ENCODE measurements at regions of chr12 and their contacts with region 1.

Region 1: GRCh38 chr12:104286538-104287482 is 16.7 kb upstream of the EID3 start:
- DNase-seq: peak; percentile 92
- ATAC-seq: peak; percentile 86
- H3K4me3 ChIP-seq: peak overlapping the region; percentile 86 to 87
- H3K27ac ChIP-seq: peak overlapping the region; percentile 99
- H3K4me1 ChIP-seq: peaks cover 25% of the 10 kb centered on the region
- H3K27me3 ChIP-seq: no peaks in the 10 kb centered on the region
- CTCF ChIP-seq: no peak

Region 2: DNA sequence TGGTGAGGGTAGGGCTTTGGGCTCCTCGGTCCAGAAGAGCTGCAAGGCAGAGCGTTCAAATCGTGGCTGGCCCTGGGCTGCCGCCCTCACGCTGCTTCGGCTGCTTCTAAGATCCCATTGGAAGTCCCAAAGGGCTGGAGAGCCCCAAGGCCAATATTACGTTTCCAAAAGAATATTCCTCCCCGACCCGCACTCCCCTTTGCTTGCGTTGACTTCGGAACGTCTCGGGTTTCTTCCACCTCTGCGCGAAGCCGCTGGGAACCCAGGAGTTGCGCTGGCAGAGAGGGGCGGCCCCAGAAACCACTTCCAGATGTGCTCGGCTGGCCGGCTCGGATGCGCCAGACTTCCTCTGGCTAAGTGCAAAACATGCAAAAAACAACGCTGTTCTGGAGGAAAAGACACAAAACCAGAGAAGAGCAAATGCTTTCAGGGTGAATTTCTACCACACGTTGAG is 236.9 kb before region 1 on chr12 and contains the start of gene GLT8D2:
- CTCF ChIA-PET with region 1: no interaction called
- POLR2A ChIA-PET with region 1: no interaction called
- in situ Hi-C with region 1: no loop called
- intact Hi-C with region 1: no loop called
- DNase-seq: no peak
- ATAC-seq: peak; percentile 81
- H3K4me3 ChIP-seq: peak within 1 kb of the TSS; percentile 44 to 59
- H3K27ac ChIP-seq: peak within 1 kb of the TSS; percentile 27; the same call in 1 of the 2 replicates
- H3K4me1 ChIP-seq: peaks cover 12% of the 10 kb centered on the region
- H3K27me3 ChIP-seq: peaks cover 3% of the 10 kb centered on the region; the same call in 1 of the 2 replicates
- CTCF ChIP-seq: no peak
- total RNA-seq, gene GLT8D2: 0.54 TPM

Region 3: DNA sequence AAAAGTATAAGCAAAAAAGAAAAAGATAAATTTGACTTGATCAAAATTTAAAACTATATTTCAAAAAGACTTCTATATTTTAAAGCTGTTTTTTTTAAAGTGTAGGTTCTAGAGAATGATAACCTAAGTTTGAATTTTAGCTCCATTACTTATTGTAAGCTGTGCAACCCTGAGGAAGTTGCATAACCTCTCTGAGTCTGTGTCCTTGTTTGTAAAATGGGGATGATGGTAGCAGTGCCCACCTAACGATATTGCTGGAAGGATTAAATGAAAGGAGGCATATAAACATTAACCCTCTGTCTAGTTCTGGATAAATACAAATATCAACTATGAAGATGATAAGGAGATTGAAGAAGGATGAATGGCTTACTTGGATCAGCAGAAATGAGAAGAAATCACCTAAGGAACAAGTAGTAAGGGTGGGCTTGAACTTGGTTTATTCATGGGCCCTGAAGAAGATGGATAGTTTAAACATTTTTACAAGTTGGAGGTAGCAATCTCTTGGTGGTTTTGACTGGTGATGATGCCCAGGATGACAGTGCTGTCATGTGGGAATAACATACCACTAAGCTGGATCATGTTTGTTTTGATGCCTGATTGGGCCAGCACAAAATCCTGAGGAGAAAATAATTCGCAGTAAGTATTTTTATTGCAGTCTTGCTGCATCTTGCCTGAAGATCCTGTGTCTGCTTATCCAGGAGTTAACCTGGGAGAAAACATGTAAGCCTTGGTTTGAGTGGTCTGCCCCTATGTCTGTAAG is 36.3 kb before region 1 on chr12:
- CTCF ChIA-PET with region 1: interaction called, 3 read pairs
- POLR2A ChIA-PET with region 1: interaction called, 10 read pairs
- in situ Hi-C with region 1: no loop called
- intact Hi-C with region 1: no loop called
- DNase-seq: no peak
- ATAC-seq: no peak
- H3K4me3 ChIP-seq: no peak overlapping the region
- H3K27ac ChIP-seq: peak overlapping the region; percentile 81
- H3K4me1 ChIP-seq: peaks cover 57% of the 10 kb centered on the region
- H3K27me3 ChIP-seq: no peaks in the 10 kb centered on the region
- CTCF ChIP-seq: no peak

Region 4: GRCh38 chr12:104276273-104277131 is 10.3 kb before region 1 on chr12:
- CTCF ChIA-PET with region 1: interaction called, 7 read pairs
- POLR2A ChIA-PET with region 1: interaction called, 31 read pairs
- in situ Hi-C with region 1: no loop called
- intact Hi-C with region 1: no loop called
- DNase-seq: no peak
- ATAC-seq: peak; percentile 68
- H3K4me3 ChIP-seq: peak overlapping the region; percentile 33 to 57
- H3K27ac ChIP-seq: peak overlapping the region; percentile 99
- H3K4me1 ChIP-seq: peaks cover 43% of the 10 kb centered on the region
- H3K27me3 ChIP-seq: no peaks in the 10 kb centered on the region
- CTCF ChIP-seq: no peak

Region 5: DNA sequence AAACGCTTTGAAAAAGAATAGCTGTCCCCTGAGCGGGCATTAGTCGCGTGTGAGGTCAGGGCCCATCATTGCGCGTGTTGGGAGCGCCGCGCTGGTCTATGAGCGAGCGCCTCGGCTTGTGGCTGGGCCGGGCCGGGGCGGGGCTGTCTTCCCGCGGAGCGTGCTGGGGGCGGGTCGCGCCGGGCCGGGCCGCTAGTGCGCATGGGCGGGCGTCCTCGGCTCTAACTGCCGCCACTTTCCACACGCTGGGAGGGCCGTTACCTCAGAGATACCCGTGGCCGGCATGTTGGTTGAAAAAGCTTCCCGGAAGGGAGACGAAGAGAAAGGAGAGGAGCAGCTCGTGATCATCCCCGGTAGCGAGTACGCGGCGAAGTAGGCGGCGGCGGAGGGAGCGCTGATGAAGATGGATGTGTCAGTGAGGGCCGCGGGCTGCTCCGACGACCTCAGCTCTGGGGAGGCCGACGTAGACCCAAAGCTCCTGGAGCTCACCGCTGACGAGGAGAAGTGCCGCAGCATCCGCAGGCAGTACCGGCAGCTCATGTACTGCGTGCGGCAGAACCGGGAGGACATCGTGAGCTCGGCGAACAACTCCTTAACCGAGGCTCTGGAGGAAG is 16.8 kb after region 1 on chr12 and contains the start of gene EID3:
- CTCF ChIA-PET with region 1: no interaction called
- POLR2A ChIA-PET with region 1: interaction called, 12 read pairs
- in situ Hi-C with region 1: no loop called
- intact Hi-C with region 1: no loop called
- DNase-seq: no peak
- ATAC-seq: peak; percentile 86
- H3K4me3 ChIP-seq: peak within 1 kb of the TSS; percentile 57 to 73
- H3K27ac ChIP-seq: peak within 1 kb of the TSS; percentile 96
- H3K4me1 ChIP-seq: peaks cover 65% of the 10 kb centered on the region
- H3K27me3 ChIP-seq: no peaks in the 10 kb centered on the region
- CTCF ChIP-seq: no peak
- total RNA-seq, gene EID3: 18.5 TPM

Region 6: DNA sequence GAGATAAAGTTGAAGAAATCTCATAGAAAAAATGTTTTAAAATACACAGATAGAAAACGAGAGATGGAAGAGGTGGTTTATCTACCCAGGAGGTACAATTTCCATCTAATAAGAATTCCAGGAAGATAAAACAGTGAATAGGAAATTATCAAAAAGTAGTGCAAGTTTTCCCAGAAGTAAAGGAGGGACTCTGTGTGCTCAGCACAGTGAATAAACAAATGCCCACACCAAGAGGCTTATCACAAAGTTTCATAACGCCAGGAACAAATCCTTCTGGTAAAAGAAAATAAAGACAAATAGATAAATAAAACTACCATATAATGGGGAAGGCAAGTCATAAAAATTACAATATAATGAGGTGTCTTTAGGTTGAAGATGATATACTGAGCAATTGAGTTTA is 492.3 kb after region 1 on chr12:
- CTCF ChIA-PET with region 1: no interaction called
- POLR2A ChIA-PET with region 1: no interaction called
- in situ Hi-C with region 1: no loop called
- intact Hi-C with region 1: no loop called
- DNase-seq: no peak
- ATAC-seq: no peak
- H3K4me3 ChIP-seq: no peak overlapping the region
- H3K27ac ChIP-seq: no peak overlapping the region
- H3K4me1 ChIP-seq: no peaks in the 10 kb centered on the region
- H3K27me3 ChIP-seq: no peaks in the 10 kb centered on the region
- CTCF ChIP-seq: no peak